Endothelial cell of umbilical vein (primary cell): ENCODE measurements at regions of chr10 and their contacts with region 1.

Region 1: DNA sequence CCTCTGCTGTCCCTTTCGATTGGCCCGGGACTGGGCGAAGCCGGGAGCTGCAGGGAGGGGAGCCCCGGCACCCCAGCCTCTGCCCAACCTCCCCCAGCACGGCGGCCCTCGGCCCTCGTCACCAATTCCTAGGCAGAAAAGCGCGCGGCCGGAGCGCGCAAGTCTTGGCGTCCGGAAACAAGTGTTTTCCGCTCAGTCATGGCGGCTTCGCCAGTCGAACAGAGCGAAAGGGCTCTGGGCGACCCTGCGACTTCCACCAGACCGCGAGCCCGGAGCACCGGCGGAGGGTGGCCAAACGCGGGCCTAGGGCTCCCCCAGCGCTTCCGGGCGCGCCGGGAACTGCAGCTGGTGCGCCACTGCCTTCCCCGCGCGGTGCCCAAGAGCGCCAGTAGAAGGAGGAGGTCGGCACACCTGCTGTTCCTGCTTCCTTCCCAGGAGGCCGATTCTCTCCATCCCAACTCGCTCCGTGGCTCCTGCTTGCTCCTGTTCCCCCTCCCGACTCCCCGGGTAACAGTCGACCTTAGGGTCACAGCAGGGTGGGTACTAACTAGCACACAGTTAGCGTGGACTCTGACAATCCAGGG is 729.9 kb downstream of the ZWINT start:
- DNase-seq: peak; percentile 32
- H3K4me3 ChIP-seq: peak overlapping the region; percentile 23 to 57 (median 51)
- H3K27ac ChIP-seq: no peak overlapping the region
- H3K4me1 ChIP-seq: peaks cover 17% of the 10 kb centered on the region
- H3K27me3 ChIP-seq: peaks cover 23 to 25% of the 10 kb centered on the region in 2 experiments
- CTCF ChIP-seq: peak; percentile 66 to 71
- POLR2A ChIP-seq: no peak

Region 2: DNA sequence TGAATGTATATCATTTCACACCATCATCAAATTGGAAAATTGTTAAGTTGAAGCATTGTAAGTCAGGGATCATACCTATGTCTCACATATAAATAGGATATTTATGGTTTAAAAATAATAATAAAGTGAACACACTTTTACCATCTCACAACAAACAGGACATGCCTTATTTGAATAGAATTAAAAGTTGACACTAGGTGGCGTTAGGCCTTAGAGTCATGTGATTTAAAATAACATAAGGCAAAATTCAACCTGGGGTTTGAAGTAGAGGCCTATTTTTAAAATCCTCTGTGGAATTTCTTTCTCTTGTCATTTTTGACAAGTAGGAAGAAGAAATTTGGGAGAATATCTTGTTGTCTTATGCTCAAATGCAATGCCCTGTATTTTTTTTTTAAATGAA is 645.4 kb before region 1 on chr10:
- CTCF ChIA-PET with region 1: no interaction called
- POLR2A ChIA-PET with region 1: no interaction called
- dilution Hi-C with region 1: no loop called
- intact Hi-C with region 1: loop called (anchors 5 kb)
- DNase-seq: peak; percentile 21
- H3K4me3 ChIP-seq: no peak overlapping the region
- H3K27ac ChIP-seq: no peak overlapping the region
- H3K4me1 ChIP-seq: no peaks in the 10 kb centered on the region
- H3K27me3 ChIP-seq: no peaks in the 10 kb centered on the region
- CTCF ChIP-seq: peak; percentile 24 to 27
- POLR2A ChIP-seq: no peak

Region 3: GRCh38 chr10:55653531-55653930 is 22.4 kb after region 1 on chr10:
- CTCF ChIA-PET with region 1: no interaction called
- POLR2A ChIA-PET with region 1: no interaction called
- dilution Hi-C with region 1: no loop called
- intact Hi-C with region 1: no loop called
- DNase-seq: no peak
- H3K4me3 ChIP-seq: no peak overlapping the region
- H3K27ac ChIP-seq: no peak overlapping the region
- H3K4me1 ChIP-seq: no peaks in the 10 kb centered on the region
- H3K27me3 ChIP-seq: no peaks in the 10 kb centered on the region
- CTCF ChIP-seq: no peak
- POLR2A ChIP-seq: no peak

Region 4: GRCh38 chr10:55668326-55668922 is 37.3 kb after region 1 on chr10:
- CTCF ChIA-PET with region 1: no interaction called
- POLR2A ChIA-PET with region 1: no interaction called
- dilution Hi-C with region 1: no loop called
- intact Hi-C with region 1: no loop called
- DNase-seq: no peak
- H3K4me3 ChIP-seq: no peak overlapping the region
- H3K27ac ChIP-seq: no peak overlapping the region
- H3K4me1 ChIP-seq: no peaks in the 10 kb centered on the region
- H3K27me3 ChIP-seq: no peaks in the 10 kb centered on the region
- CTCF ChIP-seq: no peak
- POLR2A ChIP-seq: no peak